B cell (primary cell): ENCODE measurements at regions of chr19 and their contacts with region 1.

Region 1: DNA sequence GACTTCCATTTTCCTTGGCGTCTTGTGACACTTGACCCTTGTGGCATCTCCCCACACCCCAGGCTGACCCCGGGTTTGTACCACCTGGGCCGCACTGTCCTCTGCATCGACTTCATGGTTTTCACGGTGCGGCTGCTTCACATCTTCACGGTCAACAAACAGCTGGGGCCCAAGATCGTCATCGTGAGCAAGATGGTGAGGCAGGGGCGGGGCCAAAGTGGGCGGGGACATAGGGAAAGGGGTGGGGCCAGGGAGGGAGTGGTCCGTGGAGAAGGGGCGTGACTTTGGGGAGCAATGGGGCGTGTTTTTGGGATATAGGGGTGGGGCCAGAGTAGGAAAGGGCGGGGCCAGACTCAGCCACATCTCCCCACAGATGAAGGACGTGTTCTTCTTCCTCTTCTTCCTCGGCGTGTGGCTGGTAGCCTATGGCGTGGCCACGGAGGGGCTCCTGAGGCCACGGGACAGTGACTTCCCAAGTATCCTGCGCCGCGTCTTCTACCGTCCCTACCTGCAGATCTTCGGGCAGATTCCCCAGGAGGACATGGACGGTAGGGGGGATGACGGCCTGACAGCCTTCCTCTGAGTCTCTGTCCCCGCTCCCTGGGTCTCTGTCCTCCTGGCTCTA is 42.8 kb downstream of the TRPM4 start:
- DNase-seq: no peak
- ATAC-seq: no peak
- H3K4me3 ChIP-seq: no peak overlapping the region
- H3K4me3 Mint-ChIP-seq: no peak overlapping the region
- H3K27ac ChIP-seq: no peak overlapping the region
- H3K27ac Mint-ChIP-seq: no peak overlapping the region
- H3K4me1 ChIP-seq: no peaks in the 10 kb centered on the region
- H3K4me1 Mint-ChIP-seq: peaks cover 5% of the 10 kb centered on the region
- H3K27me3 ChIP-seq: no peaks in the 10 kb centered on the region
- H3K27me3 Mint-ChIP-seq: no peaks in the 10 kb centered on the region
- CTCF ChIP-seq: no peak

Region 2: GRCh38 chr19:49073514-49074378 is 126.6 kb before region 1 on chr19:
- CTCF ChIA-PET with region 1: interaction called, 11 read pairs
- POLR2A ChIA-PET with region 1: no interaction called
- intact Hi-C with region 1: loop called (anchors 2 kb)
- DNase-seq: no peak
- ATAC-seq: no peak
- H3K4me3 ChIP-seq: no peak overlapping the region
- H3K4me3 Mint-ChIP-seq: peak overlapping the region; percentile 47
- H3K27ac ChIP-seq: no peak overlapping the region
- H3K27ac Mint-ChIP-seq: no peak overlapping the region
- H3K4me1 ChIP-seq: peaks cover 7 to 16% of the 10 kb centered on the region in 2 donors
- H3K4me1 Mint-ChIP-seq: peaks cover 11% of the 10 kb centered on the region
- H3K27me3 ChIP-seq: peaks cover 0 to 57% (median 23%) of the 10 kb centered on the region in 4 experiments
- H3K27me3 Mint-ChIP-seq: peaks cover 53% of the 10 kb centered on the region
- CTCF ChIP-seq: no peak

Region 3: GRCh38 chr19:49097455-49098288 is 102.7 kb before region 1 on chr19:
- CTCF ChIA-PET with region 1: interaction called, 82 read pairs
- POLR2A ChIA-PET with region 1: interaction called, 4 read pairs
- intact Hi-C with region 1: loop called (anchors 2 kb)
- DNase-seq: peak; percentile 84
- ATAC-seq: peak; percentile 95
- H3K4me3 ChIP-seq: no peak overlapping the region
- H3K4me3 Mint-ChIP-seq: no peak overlapping the region
- H3K27ac ChIP-seq: no peak overlapping the region
- H3K27ac Mint-ChIP-seq: no peak overlapping the region
- H3K4me1 ChIP-seq: no peaks in the 10 kb centered on the region
- H3K4me1 Mint-ChIP-seq: peaks cover 4% of the 10 kb centered on the region
- H3K27me3 ChIP-seq: no peaks in the 10 kb centered on the region
- H3K27me3 Mint-ChIP-seq: no peaks in the 10 kb centered on the region
- CTCF ChIP-seq: peak; percentile 99

Region 4: GRCh38 chr19:49148784-49149651 is 51.3 kb before region 1 on chr19:
- CTCF ChIA-PET with region 1: interaction called, 4 read pairs
- POLR2A ChIA-PET with region 1: no interaction called
- intact Hi-C with region 1: loop called (anchors 10 kb)
- DNase-seq: peak; percentile 82
- ATAC-seq: peak; percentile 53
- H3K4me3 ChIP-seq: peak overlapping the region in 4 of 5 experiments; percentile 57 to 76 (median 61)
- H3K4me3 Mint-ChIP-seq: peak overlapping the region; percentile 89
- H3K27ac ChIP-seq: no peak overlapping the region
- H3K27ac Mint-ChIP-seq: no peak overlapping the region
- H3K4me1 ChIP-seq: peaks cover 44 to 48% of the 10 kb centered on the region in 2 donors
- H3K4me1 Mint-ChIP-seq: peaks cover 42% of the 10 kb centered on the region
- H3K27me3 ChIP-seq: peaks cover 0 to 81% (median 38%) of the 10 kb centered on the region in 4 experiments
- H3K27me3 Mint-ChIP-seq: peaks cover 57% of the 10 kb centered on the region
- CTCF ChIP-seq: no peak

Region 5: DNA sequence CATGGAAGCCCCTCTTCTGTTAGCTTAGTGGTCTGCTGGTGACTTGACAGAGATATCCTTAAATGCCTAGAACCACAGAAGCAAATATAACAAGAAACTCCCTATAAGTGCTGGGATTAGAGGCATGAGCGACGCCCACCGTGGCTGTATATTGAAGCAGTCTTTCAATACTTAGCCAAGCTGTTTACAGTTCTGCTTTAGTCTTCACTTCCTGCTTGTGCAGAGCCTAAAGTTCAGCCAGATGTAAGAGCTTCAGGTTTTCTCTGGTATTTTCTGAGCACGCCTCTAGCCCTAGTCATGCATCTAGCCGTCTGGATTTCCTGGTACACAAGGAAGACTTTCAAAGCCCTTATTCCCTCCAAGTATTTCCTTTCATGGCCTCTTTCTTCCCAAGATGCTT is 14.2 kb before region 1 on chr19:
- CTCF ChIA-PET with region 1: interaction called, 26 read pairs
- POLR2A ChIA-PET with region 1: no interaction called
- intact Hi-C with region 1: no loop called
- DNase-seq: no peak
- ATAC-seq: no peak
- H3K4me3 ChIP-seq: no peak overlapping the region
- H3K4me3 Mint-ChIP-seq: peak overlapping the region; percentile 19
- H3K27ac ChIP-seq: no peak overlapping the region
- H3K27ac Mint-ChIP-seq: peak overlapping the region; percentile 72
- H3K4me1 ChIP-seq: no peaks in the 10 kb centered on the region
- H3K4me1 Mint-ChIP-seq: peaks cover 5% of the 10 kb centered on the region
- H3K27me3 ChIP-seq: peaks cover 0 to 7% (median 1%) of the 10 kb centered on the region in 4 experiments
- H3K27me3 Mint-ChIP-seq: peaks cover 12% of the 10 kb centered on the region
- CTCF ChIP-seq: no peak